OCI-LY7 (cell line): ENCODE measurements at regions of chr14 and their contacts with region 1.

Region 1: DNA sequence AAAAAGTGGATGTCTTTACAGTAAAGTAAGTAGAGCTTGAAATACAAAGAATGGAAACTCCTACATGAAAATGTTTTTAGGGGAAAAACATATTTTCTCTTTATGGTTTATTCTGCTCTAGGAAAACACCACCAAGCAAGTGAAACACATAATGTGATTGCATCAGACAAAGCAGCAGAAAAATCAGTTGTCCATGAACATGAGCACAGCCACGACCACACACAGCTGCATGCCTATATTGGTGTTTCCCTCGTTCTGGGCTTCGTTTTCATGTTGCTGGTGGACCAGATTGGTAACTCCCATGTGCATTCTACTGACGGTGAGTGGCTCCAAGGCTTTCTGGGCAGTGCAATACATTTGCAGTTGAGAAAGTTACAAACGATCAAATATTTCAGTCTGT is 42.6 kb upstream of the PLEKHD1 start:
- DNase-seq: peak; percentile 88
- H3K4me3 ChIP-seq: peak overlapping the region; percentile 24
- H3K27ac ChIP-seq: peak overlapping the region; percentile 85
- H3K4me1 ChIP-seq: peaks cover 28% of the 10 kb centered on the region
- CTCF ChIP-seq: no peak

Region 2: DNA sequence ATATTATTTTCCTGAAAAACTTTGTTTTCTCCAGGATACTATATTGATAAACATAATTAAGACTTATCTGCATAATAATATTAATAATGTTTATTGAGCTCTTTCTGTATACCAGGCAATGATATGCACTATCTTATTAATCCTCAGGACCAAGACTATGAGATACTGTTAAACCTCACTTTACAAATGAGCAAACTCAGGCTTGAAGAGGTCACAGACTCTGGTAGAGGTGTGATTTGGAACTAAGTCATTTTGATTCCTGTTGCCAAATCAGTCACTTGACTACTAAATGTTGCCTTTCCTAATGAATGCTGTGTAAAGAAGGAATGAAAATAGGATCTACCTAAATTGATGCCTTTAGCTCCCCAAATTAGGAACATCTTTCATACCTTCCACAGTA is 36.2 kb before region 1 on chr14:
- CTCF ChIA-PET with region 1: no interaction called
- POLR2A ChIA-PET with region 1: interaction called, 14 read pairs
- intact Hi-C with region 1: no loop called
- DNase-seq: no peak
- H3K4me3 ChIP-seq: no peak overlapping the region
- H3K27ac ChIP-seq: no peak overlapping the region
- H3K4me1 ChIP-seq: peaks cover 16% of the 10 kb centered on the region
- CTCF ChIP-seq: no peak